ENCODE measurements at regions of chr6 and their contacts with region 1.

Region 1: GRCh38 chr6:105992315-105992961 is 93.7 kb upstream of the PRDM1 start:
- DNase-seq: peak; percentile 80 to 97
- H3K4me3 ChIP-seq: peak overlapping the region; percentile 84
- CTCF ChIP-seq: no peak
- POLR2A ChIP-seq: no peak

Region 2: GRCh38 chr6:106072501-106073090 is 80.2 kb after region 1 on chr6:
- intact Hi-C with region 1: loop called (anchors 10 kb)
- DNase-seq: no peak
- H3K4me3 ChIP-seq: no peak overlapping the region
- CTCF ChIP-seq: no peak
- POLR2A ChIP-seq: no peak

Region 3: DNA sequence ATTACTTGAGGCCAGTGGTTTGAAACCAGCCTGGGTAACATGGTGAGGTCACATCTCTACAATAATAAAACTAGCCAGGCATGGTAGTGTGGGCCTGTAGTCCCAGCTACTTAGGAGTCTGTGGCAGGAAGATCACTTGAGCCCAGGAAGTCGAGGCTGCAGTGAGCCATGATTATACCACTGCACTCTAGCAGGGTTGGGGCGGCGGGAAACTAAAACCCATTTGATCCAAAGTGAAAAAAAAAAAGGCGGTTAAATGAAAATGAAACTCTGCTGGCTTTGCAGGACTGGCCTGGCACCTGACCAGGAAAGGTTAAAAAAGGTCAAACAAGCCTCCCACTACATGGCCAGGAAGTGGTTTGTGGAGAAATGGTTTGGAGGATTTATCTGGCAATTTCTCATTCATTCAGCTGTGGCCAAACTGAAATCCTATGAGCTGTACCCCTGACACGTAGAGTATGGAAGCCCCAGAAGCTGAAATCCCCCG is 1072.2 kb after region 1 on chr6:
- intact Hi-C with region 1: no loop called
- DNase-seq: no peak
- H3K4me3 ChIP-seq: no peak overlapping the region
- CTCF ChIP-seq: no peak
- POLR2A ChIP-seq: no peak